ENCODE measurements at regions of chr6 and their contacts with region 1.

Region 1: GRCh38 chr6:137699031-137699683 is 167.9 kb upstream of the TNFAIP3 start:
- DNase-seq: peak; percentile 71
- H3K4me3 Mint-ChIP-seq: peak overlapping the region; percentile 3
- H3K27ac Mint-ChIP-seq: peak overlapping the region; percentile 78
- H3K4me1 Mint-ChIP-seq: peaks cover 31% of the 10 kb centered on the region
- H3K27me3 Mint-ChIP-seq: peaks cover 12% of the 10 kb centered on the region

Region 2: GRCh38 chr6:137291441-137291840 is 407.7 kb before region 1 on chr6:
- CTCF ChIA-PET with region 1: no interaction called
- intact Hi-C with region 1: no loop called
- DNase-seq: no peak
- H3K4me3 Mint-ChIP-seq: no peak overlapping the region
- H3K27ac Mint-ChIP-seq: no peak overlapping the region
- H3K4me1 Mint-ChIP-seq: peaks cover 4% of the 10 kb centered on the region
- H3K27me3 Mint-ChIP-seq: peaks cover 6% of the 10 kb centered on the region

Region 3: GRCh38 chr6:137661601-137662000 is 37.6 kb before region 1 on chr6:
- CTCF ChIA-PET with region 1: interaction called, 4 read pairs
- intact Hi-C with region 1: loop called (anchors 1 kb)
- DNase-seq: peak; percentile 71
- H3K4me3 Mint-ChIP-seq: no peak overlapping the region
- H3K27ac Mint-ChIP-seq: no peak overlapping the region
- H3K4me1 Mint-ChIP-seq: peaks cover 19% of the 10 kb centered on the region
- H3K27me3 Mint-ChIP-seq: peaks cover 4% of the 10 kb centered on the region

Region 4: GRCh38 chr6:137688230-137688971 is 10.8 kb before region 1 on chr6:
- CTCF ChIA-PET with region 1: interaction called, 5 read pairs
- intact Hi-C with region 1: loop called (anchors 1 kb)
- DNase-seq: no peak
- H3K4me3 Mint-ChIP-seq: no peak overlapping the region
- H3K27ac Mint-ChIP-seq: no peak overlapping the region
- H3K4me1 Mint-ChIP-seq: peaks cover 21% of the 10 kb centered on the region
- H3K27me3 Mint-ChIP-seq: peaks cover 10% of the 10 kb centered on the region

Region 5: DNA sequence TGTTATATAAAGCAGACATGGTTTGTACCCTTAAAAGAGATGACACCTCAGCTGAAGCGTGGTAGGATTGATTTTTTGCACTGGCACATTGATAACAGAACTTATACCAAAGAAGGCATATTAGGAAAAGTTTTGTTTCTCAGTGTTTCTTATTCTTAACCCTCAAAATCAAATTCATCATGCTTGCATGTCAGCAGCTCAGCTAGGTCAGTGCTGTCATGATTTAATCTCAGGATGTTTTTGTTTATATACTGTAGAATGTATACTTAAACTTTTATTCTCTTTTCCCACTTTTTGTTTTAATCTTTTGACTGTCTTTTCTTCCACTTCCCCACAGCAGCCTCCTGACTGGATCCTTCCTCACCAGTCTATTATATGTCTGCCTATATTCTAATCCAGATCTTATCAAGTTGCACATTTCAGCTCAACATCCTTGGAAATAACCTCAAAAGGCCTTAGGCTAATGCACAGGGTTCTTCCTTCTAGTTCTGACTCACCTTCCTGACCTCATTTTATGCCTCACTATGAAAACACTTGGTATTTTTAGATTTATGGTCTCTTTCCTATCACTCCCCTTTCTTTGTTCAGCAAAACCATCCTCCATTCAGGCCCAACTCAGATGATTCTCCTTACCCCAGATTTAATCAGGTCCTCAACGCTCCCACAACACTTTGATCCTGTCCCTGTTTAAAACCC is 712.0 kb after region 1 on chr6:
- CTCF ChIA-PET with region 1: no interaction called
- intact Hi-C with region 1: loop called (anchors 1 kb)
- DNase-seq: peak; percentile 31
- H3K4me3 Mint-ChIP-seq: peak overlapping the region; percentile 1
- H3K27ac Mint-ChIP-seq: peak overlapping the region; percentile 84
- H3K4me1 Mint-ChIP-seq: peaks cover 32% of the 10 kb centered on the region
- H3K27me3 Mint-ChIP-seq: no peaks in the 10 kb centered on the region

Measured in activated naive CD4-positive, alpha-beta T cell treated with anti-CD3 and anti-CD28 coated beads for 36 hours (primary cell).